ENCODE measurements at regions of chr15 and their contacts with region 1.

Region 1: DNA sequence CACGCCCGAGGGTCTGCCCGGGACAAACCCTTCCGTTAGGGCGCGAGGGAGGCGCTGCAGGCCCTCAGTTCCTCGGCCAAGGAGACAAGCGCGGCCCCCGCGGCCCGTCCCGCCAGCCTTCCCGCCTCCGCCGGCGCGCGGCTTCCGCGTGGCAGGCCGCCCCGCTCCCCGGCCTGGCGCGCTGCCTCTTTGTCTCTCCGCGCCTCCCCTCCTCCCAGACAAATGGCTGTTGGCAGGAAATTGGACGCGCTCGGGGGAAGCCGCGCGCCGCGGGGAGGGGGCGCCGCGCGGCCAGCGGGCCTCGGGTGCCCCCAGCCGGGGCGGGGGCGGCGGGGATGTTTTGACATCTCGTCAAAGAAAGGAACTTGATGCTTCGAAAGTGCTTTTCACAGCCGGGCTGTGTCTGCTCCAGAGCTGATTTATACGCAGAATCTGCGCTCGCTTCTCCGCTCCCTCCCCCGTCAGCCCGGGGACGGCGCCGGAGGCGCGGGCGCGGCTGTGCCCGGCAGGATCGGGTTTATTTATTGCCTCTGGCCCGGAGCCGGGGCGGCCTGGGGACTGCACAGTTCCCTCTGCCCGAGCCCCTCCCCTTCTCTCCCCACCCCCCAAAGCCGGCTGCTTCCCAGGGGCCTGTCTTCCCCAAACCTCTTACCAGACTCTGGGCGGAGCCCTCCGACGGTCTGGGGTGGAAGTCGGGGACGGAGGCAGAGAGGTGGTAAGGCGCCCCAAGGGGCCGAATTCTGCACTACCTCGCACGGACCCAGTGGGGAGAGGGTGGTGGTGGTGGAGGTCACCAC is 20.7 kb downstream of the SHF start:
- DNase-seq: peak; percentile 92
- ATAC-seq: peak; percentile 95
- H3K4me3 Mint-ChIP-seq: peak overlapping the region; percentile 61
- H3K27ac Mint-ChIP-seq: peak overlapping the region; percentile 79
- H3K4me1 Mint-ChIP-seq: peaks cover 14% of the 10 kb centered on the region
- H3K27me3 Mint-ChIP-seq: no peaks in the 10 kb centered on the region

Region 2: DNA sequence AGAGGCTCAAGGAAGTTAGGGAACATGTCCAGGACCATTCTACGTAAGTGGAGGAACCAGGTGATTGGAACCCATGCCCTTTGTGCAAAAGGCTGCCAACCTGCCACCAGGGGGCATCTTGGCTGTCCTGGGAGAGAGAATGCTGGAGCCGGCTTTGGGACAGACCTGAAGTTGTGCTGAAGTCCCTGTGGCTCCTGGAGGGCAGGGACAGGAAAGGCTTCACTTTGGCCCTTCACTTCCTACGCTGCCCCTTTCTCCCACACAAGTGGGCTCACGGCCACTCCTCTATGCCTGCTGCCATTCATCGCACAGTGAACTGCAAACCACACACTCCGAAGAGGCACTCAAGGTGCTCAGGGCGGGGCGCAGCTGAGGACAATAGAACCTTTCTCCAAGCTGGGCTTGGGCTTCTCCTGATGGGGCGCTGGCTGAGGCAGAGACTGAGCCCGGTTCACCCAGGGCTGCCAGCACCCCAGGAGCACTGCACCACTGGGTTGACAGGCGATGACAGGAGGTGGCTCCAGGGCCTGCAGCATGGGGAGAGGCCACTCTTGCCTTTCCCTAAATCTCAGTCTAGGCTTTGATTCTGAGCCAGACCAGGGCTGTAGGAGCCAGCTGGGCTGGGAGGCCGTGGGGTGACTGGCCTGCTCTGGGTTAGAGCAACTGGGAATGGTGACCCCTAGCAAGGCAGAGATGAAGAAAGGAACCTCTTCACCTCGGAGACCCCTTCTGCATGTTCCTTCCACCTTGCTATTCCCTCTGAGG is 12.4 kb after region 1 on chr15:
- CTCF ChIA-PET with region 1: interaction called, 60 read pairs
- DNase-seq: peak; percentile 54
- ATAC-seq: no peak
- H3K4me3 Mint-ChIP-seq: no peak overlapping the region
- H3K27ac Mint-ChIP-seq: no peak overlapping the region
- H3K4me1 Mint-ChIP-seq: peaks cover 17% of the 10 kb centered on the region
- H3K27me3 Mint-ChIP-seq: no peaks in the 10 kb centered on the region

Region 3: DNA sequence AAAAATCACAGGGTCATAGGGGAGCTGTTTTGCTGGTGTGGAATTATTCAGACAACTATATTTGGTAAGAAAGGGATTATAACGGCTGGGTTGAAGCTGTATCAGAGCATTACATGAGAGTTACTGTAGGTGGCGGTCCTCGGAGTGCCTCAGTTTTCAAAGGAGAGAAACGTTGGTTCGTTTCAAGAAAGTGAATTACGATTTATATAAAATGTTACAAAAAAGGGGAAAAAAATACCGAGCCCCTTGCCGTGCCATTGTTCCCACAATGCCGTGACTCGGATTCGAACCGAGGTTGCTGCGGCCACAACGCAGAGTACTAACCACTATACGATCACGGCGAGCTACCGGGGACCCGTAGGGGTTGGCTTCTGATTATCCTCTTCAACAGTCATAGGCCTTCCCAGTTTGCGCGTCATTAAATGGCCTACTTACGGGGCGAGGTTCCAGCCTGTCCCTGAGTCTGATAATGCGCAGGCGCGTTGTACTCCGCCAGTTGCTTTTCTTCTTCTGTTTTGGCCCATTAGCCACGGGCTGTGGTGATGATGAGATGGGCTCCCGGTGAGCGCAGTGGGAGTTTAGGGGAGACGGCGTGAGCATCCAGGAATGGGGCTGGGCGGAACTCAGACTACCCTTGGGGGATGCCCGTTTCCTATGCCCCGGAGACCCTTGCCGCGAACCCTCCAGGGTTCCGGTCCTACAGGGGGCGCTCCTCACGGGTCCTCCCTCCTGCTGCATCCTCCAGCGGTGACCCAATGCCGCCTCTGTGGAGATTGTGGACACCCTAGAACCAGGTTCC is 31.5 kb after region 1 on chr15:
- CTCF ChIA-PET with region 1: interaction called, 258 read pairs
- DNase-seq: peak; percentile 97
- ATAC-seq: peak; percentile 74
- H3K4me3 Mint-ChIP-seq: no peak overlapping the region
- H3K27ac Mint-ChIP-seq: no peak overlapping the region
- H3K4me1 Mint-ChIP-seq: peaks cover 10% of the 10 kb centered on the region
- H3K27me3 Mint-ChIP-seq: peaks cover 5% of the 10 kb centered on the region

Region 4: DNA sequence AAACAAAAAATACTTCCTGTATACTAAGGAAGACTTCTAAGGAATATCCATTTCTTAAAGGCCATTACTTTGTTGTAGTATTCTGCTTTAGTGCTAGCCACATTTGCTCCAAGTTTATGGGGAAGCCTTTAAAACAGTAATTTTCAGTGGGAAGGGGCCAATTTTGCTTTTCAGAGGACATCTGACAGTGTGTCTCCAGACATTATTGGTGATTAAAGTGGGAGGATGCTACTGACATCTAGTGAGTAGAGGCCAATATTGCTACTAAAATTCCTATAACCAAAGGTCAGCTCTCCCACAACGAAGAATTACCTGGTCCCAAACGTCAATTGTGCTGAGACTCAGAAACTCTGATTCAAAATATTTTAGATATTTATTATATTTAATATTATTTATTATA is 109.8 kb after region 1 on chr15:
- CTCF ChIA-PET with region 1: interaction called, 10 read pairs
- DNase-seq: no peak
- ATAC-seq: no peak
- H3K4me3 Mint-ChIP-seq: no peak overlapping the region
- H3K27ac Mint-ChIP-seq: no peak overlapping the region
- H3K4me1 Mint-ChIP-seq: peaks cover 21% of the 10 kb centered on the region
- H3K27me3 Mint-ChIP-seq: no peaks in the 10 kb centered on the region

Region 5: DNA sequence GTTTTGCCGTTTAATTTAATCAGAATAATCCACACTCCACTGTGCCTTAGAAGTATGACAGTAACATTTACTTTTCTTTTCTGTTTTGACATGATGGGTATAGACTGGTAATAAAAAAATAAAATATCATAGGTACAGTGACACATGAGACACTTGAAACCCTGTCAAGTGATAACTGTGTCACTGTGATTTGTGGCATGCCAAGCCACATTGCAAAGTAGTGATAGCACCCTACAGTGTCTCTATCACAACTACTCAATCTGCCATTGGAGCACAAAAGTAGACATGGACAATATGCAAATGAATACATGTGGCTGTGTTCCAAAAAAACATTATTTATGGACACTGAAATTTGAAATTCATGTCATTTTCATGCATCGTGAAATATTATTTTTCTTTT is 188.8 kb after region 1 on chr15:
- CTCF ChIA-PET with region 1: no interaction called
- DNase-seq: no peak
- ATAC-seq: no peak
- H3K4me3 Mint-ChIP-seq: no peak overlapping the region
- H3K27ac Mint-ChIP-seq: no peak overlapping the region
- H3K4me1 Mint-ChIP-seq: no peaks in the 10 kb centered on the region
- H3K27me3 Mint-ChIP-seq: peaks cover 24% of the 10 kb centered on the region

Measured in activated CD8-positive, alpha-beta memory T cell treated with anti-CD3 and anti-CD28 coated beads, Interleukin-2, amount 10 ng/mL, durations not matched to agents 7 days and 5 days (primary cell).